Common myeloid progenitor, CD34-positive (primary cell): ENCODE measurements at regions of chr10 and their contacts with region 1.

Region 1: GRCh38 chr10:30027057-30028005 is 32.1 kb downstream of the JCAD start:
- DNase-seq: peak; percentile 95 to 99 (median 98)
- H3K4me3 ChIP-seq: peak overlapping the region in 4 of 7 experiments; percentile 5 to 50 (median 33)
- H3K27ac ChIP-seq: no peak overlapping the region
- H3K4me1 ChIP-seq: peaks cover 0 to 33% (median 26%) of the 10 kb centered on the region in 4 experiments
- H3K27me3 ChIP-seq: peaks cover 0 to 20% (median 0%) of the 10 kb centered on the region in 5 experiments

Region 2: DNA sequence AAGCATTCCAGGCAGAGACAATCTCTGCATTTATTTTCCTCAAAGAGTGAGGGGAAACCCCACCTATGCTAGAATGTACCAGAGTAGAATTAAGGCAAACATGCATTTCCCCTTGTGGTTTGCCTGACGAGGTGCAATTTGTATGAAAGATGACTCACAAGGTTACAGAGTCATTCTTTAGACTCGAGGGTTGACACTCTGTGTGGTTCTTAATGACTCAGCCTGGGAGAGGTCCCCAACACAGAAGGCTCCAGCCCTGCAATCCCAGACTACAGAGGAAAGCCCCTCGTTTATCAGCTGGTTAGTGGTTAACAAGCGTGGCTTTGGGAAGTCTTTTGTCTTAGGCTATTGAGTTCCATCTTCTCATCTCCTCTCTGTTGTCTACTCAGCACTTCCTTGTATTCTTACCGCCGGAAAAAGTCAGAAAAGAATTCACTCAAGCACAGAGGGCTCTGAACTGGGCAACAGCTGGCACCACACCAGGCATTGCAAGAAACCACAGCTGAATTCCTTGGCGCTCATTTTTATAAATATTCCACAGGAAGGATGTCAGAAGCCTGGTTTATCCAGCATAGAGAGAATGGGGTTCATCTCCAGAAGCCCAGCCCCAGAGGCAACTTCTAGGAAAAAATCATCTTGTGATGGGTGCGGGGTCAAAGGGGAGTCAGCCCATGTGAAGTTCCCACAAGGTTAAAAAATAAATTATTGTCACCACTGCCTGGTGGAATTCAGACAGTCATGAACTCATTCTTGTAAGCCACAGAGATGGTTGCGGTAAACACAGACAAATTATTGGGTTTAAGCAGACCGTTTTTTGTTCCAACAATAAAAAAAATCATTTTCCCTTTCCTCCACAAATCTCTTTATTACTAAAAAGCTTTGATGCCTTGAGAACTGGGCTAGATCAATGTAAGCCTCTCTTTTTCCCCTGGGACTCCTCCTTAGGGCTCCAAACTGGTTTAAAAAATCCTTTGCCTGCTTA is 368.1 kb before region 1 on chr10:
- CTCF ChIA-PET with region 1: no interaction called
- POLR2A ChIA-PET with region 1: no interaction called
- DNase-seq: peak; percentile 90 to 98 (median 96)
- H3K4me3 ChIP-seq: peak overlapping the region in 2 of 7 experiments; percentile 5 to 20
- H3K27ac ChIP-seq: no peak overlapping the region
- H3K4me1 ChIP-seq: peaks cover 2 to 16% (median 11%) of the 10 kb centered on the region in 4 experiments
- H3K27me3 ChIP-seq: no peaks in the 10 kb centered on the region

Region 3: GRCh38 chr10:29689001-29689400 is 338.3 kb before region 1 on chr10:
- CTCF ChIA-PET with region 1: no interaction called
- POLR2A ChIA-PET with region 1: no interaction called
- DNase-seq: peak; percentile 33 to 77 (median 66)
- H3K4me3 ChIP-seq: no peak overlapping the region
- H3K27ac ChIP-seq: no peak overlapping the region
- H3K4me1 ChIP-seq: peaks cover 9 to 20% (median 14%) of the 10 kb centered on the region in 4 experiments
- H3K27me3 ChIP-seq: no peaks in the 10 kb centered on the region

Region 4: DNA sequence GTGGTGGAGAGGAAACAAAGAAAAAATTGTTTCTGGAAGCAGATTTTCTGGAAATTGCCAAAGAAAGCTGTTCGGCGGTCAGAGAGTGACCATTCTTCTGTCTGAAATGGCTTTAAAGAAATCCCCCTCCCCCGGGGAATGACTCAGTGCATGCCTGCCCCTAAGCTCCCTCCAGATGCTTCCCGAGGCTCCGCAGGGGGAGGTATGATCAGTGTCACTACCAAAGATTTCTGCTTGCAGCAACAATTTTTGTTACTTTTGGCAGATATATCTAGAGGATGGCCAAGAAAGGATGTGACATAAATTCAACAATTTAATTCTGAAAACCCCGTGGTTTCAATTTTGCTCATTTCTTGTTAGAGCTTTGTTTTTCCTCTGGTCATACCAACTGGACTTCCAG is 131.9 kb before region 1 on chr10:
- CTCF ChIA-PET with region 1: no interaction called
- POLR2A ChIA-PET with region 1: no interaction called
- DNase-seq: no peak
- H3K4me3 ChIP-seq: no peak overlapping the region
- H3K27ac ChIP-seq: no peak overlapping the region
- H3K4me1 ChIP-seq: no peaks in the 10 kb centered on the region
- H3K27me3 ChIP-seq: no peaks in the 10 kb centered on the region

Region 5: DNA sequence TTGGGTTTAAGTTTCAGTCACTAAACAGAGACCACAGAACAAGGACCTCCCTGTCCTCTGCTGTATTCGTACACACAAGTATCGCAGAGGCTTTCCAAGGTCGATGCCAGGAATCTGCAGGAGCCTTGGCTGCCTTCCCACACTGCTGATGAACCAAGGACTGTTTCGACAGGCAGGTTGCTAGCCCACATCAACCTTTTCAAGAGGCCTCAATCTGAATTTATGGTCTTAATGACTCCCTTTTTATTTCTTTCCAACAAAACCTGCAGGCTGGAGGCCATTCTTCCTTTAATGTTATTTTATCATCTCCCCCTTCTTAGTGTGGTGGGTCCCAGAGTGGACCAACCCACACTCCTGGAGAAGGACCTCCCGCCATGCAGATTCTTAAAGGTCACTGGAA is 13.6 kb before region 1 on chr10:
- CTCF ChIA-PET with region 1: interaction called, 14 read pairs
- POLR2A ChIA-PET with region 1: no interaction called
- DNase-seq: no peak
- H3K4me3 ChIP-seq: no peak overlapping the region
- H3K27ac ChIP-seq: no peak overlapping the region
- H3K4me1 ChIP-seq: peaks cover 15 to 25% (median 16%) of the 10 kb centered on the region in 4 experiments
- H3K27me3 ChIP-seq: peaks cover 0 to 3% (median 0%) of the 10 kb centered on the region in 5 experiments

Region 6: GRCh38 chr10:30041196-30042105 is 14.1 kb after region 1 on chr10:
- CTCF ChIA-PET with region 1: interaction called, 41 read pairs
- POLR2A ChIA-PET with region 1: interaction called, 3 read pairs
- DNase-seq: peak; percentile 45 to 84 (median 67)
- H3K4me3 ChIP-seq: peak overlapping the region in 1 of 7 experiments; percentile 7
- H3K27ac ChIP-seq: no peak overlapping the region
- H3K4me1 ChIP-seq: peaks cover 12 to 72% (median 36%) of the 10 kb centered on the region in 4 experiments
- H3K27me3 ChIP-seq: no peaks in the 10 kb centered on the region

Region 7: DNA sequence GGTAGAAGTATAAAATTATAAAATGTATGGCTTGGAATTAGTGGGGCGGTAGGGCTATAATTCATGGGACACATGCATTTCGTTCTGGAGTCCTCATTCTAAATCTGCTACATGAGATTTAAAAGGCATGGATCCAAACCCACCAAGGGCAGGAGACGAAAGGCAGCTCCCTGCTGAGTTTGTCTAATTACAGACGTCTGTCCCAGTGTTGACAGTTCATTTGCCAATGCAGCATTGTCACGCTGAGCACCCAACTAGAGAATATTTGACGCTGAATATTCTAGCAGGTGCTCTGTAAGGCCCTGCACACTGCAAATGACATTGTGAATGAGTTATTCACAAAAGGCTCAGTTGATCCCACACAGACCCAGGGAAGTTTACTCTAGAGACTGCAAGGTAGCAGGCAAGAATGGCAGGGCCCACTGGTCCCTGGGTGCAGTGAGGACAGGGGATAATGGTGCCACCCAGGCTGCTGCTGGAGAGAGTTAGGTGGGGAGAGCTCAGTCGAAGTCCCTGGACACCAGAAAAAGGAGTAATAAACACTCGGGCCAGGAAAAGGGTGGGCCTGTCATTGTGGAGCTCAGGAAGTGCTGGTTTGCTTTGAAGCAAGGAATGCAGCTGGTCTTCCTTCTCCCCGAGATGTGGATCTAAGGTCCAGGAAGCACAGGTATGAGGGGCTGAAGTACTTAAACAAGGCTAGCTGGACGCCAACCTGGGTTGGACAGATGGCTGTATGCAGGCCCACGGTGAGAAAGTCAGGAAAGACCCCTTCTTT is 107.0 kb after region 1 on chr10:
- CTCF ChIA-PET with region 1: no interaction called
- POLR2A ChIA-PET with region 1: no interaction called
- DNase-seq: no peak
- H3K4me3 ChIP-seq: no peak overlapping the region
- H3K27ac ChIP-seq: no peak overlapping the region
- H3K4me1 ChIP-seq: no peaks in the 10 kb centered on the region
- H3K27me3 ChIP-seq: no peaks in the 10 kb centered on the region